Right ventricle myocardium superior (tissue), 1 donor: ENCODE measurements at regions of chr13 and their contacts with region 1.

Region 1: DNA sequence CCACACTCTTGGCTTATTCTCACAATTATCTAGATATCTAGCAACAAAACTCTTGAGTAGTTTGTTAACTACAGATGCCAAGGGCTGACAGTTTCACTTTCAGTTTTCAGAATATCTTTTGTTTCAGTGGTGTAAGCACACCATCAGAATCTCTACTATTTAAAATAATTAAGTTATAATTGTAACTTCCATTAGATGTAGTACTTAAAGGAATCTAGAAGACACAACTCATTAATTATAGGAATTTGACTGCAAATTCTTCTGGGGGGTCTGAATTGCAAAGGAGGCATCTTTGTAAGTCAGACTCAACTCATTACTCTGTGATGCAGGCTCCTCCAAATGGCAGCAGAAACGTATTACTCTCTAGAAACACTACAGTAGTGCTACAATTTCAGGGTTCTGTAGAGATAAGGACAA is 44.9 kb upstream of the USPL1 start:
- DNase-seq: no peak
- ATAC-seq: peak; percentile 71

Region 2: GRCh38 chr13:30408319-30409101 is 164.4 kb before region 1 on chr13:
- intact Hi-C with region 1: loop called (anchors 10 kb)
- DNase-seq: peak; percentile 97
- ATAC-seq: peak; percentile 95